ENCODE measurements at regions of chr12 and their contacts with region 1.

Region 1: GRCh38 chr12:57111031-57111734 is at the start of gene STAT6:
- DNase-seq: peak; percentile 88 to 94 (median 92)
- ATAC-seq: peak; percentile 85 to 87
- H3K4me3 ChIP-seq: peak within 1 kb of the TSS; percentile 56
- H3K27ac ChIP-seq: peak within 1 kb of the TSS; percentile 100
- H3K4me1 ChIP-seq: peaks cover 8% of the 10 kb centered on the region
- H3K27me3 ChIP-seq: no peaks in the 10 kb centered on the region
- total RNA-seq, gene STAT6: 77.8 to 89.6 (median 83.6) TPM

Region 2: GRCh38 chr12:56420411-56420810 is 690.8 kb before region 1 on chr12:
- intact Hi-C with region 1: no loop called
- DNase-seq: no peak
- ATAC-seq: no peak
- H3K4me3 ChIP-seq: no peak overlapping the region
- H3K27ac ChIP-seq: no peak overlapping the region
- H3K4me1 ChIP-seq: no peaks in the 10 kb centered on the region
- H3K27me3 ChIP-seq: no peaks in the 10 kb centered on the region

Region 3: DNA sequence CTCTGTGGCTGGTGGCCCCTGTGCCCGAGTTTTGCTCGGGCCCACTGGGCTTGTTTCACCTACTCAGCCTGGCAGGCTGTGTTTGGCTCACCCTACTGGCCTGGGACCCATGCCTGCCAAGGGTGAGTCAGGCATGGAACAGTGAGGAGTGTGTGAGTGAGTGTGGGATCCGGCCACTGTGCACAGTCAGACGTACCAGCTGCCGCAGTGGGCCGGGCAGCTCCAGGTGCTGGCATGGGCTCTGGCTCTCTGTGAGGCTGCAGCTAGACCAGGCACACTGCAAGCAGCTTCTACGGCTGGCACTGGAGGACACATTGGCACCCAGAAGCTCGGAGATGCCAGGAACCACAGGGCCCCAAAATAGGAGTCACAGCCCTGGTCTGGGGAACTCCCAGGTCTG is 307.4 kb before region 1 on chr12:
- intact Hi-C with region 1: no loop called
- DNase-seq: no peak
- ATAC-seq: peak; percentile 79 to 80
- H3K4me3 ChIP-seq: no peak overlapping the region
- H3K27ac ChIP-seq: no peak overlapping the region
- H3K4me1 ChIP-seq: no peaks in the 10 kb centered on the region
- H3K27me3 ChIP-seq: no peaks in the 10 kb centered on the region

Region 4: DNA sequence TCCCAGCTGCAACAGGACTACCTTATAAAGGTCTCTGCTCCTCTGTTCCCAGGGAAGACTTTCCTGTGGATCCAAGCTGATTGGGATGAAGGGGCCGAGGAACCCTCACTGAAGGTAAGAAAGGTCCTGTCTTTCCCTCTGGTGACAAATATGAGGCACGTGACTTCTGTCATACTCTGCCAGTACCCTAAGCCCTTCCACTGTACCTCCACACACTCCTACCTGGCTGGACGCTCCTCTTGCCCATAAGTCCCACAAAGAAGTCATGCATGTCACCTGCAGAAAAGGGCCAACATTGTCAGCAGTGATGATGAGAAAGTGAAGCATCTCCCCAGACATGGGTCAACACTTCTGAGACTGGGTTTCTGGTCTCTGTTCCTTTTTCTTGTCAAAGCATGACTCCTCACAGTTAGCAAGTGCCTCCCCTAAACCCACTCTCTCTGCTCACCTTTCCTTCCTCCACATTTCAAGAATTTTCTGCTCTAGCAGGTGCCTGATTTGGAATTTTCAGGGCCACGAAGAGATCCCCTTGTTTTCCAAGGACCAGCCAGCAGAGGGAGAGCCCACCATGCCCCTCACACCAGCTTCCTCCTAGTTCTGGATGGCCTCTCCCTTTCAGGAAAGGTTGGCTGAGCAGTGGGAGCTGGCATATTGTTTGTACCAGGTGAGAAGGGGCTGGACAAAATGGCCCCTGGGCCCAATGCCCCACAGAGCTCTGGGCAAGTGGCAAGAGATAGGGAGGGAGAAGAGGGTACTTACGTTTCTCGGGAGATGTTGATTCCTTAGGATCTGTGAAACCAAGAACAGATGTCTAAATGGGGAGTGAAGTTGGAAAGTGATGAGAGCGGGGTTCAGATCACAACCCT is 98.3 kb before region 1 on chr12:
- intact Hi-C with region 1: loop called in 1 of 4 experiments (anchors 10 kb)
- DNase-seq: no peak
- ATAC-seq: no peak
- H3K4me3 ChIP-seq: no peak overlapping the region
- H3K27ac ChIP-seq: no peak overlapping the region
- H3K4me1 ChIP-seq: no peaks in the 10 kb centered on the region
- H3K27me3 ChIP-seq: no peaks in the 10 kb centered on the region

Region 5: DNA sequence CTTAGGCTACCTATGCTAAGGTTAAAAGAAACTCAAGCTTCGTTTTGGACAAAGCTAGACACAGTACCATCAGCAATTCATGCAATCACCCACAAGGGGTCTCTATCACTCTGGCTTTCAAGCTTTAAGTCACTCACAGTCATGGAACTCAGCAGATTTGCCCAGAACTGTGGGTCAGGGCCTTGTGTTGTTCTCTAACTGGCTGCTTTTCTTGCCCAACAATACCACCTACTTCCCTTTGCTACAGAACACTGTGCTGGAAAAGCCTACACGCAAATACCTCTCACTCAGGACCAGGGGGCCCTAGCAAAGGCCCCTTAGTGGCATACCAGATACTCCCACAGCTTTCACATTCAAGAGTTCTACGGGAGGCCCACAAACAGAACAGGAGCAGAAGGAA is 41.7 kb before region 1 on chr12:
- intact Hi-C with region 1: loop called (anchors 1 to 2 kb)
- DNase-seq: peak in 2 of 3 donors; percentile 41 to 65
- ATAC-seq: peak; percentile 92 to 93
- H3K4me3 ChIP-seq: no peak overlapping the region
- H3K27ac ChIP-seq: peak overlapping the region; percentile 57
- H3K4me1 ChIP-seq: no peaks in the 10 kb centered on the region
- H3K27me3 ChIP-seq: no peaks in the 10 kb centered on the region

Measured in right cardiac atrium (tissue), 5 donors.